ENCODE measurements at regions of chr4 and their contacts with region 1.

Region 1: GRCh38 chr4:118981839-118982381 is 93.3 kb downstream of the SYNPO2 start:
- H3K4me3 Mint-ChIP-seq: no peak overlapping the region
- H3K27ac Mint-ChIP-seq: no peak overlapping the region
- H3K4me1 Mint-ChIP-seq: peaks cover 19% of the 10 kb centered on the region
- H3K27me3 Mint-ChIP-seq: no peaks in the 10 kb centered on the region

Region 2: DNA sequence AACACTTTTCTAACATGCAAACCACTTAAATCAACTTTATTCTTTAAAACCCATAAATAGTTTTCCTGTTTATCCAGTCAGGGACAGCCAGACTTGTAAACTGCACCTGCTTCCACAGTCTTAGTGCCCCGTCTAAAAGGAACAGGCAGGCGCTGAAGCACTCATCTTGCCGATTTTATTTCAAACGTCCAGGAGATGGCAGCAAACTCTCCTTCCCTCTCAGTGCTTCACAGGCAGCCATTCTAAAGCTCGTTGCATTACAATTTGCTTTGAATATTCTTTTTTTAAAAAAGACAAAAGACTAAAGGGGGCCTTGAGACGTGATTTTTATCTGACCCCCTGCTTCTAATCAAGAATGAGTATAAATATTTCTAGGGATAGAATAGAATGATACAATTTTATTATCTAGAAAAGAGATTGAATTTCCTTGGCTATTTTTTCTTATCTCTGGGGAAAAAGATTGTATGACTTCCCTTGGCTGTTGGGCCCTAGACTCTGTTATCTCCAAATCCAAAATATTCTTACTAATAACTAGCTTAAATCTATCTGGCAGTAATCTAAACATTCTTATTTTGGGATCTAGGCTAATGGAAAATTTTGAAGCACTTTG is 60.1 kb after region 1 on chr4:
- intact Hi-C with region 1: loop called (anchors 2 kb)
- H3K4me3 Mint-ChIP-seq: no peak overlapping the region
- H3K27ac Mint-ChIP-seq: no peak overlapping the region
- H3K4me1 Mint-ChIP-seq: peaks cover 21% of the 10 kb centered on the region
- H3K27me3 Mint-ChIP-seq: no peaks in the 10 kb centered on the region

Region 3: DNA sequence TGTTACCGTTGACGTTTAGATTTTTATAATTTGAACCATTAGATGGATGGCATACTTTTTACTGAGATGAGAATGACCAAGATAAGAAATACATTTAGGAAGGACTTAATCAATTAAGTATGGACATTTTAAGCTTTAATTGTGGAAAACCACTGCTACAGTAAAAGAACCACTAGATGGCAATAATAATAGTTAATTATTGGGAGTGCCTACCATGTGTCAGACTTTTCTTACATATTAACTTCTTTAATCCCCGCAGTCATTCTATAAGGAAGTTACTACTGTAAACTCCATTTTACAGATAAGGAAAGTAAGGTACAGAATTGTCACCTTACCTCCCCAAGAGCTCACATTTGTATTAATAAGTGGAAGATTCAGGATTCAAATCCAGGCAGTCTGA is 105.2 kb after region 1 on chr4:
- intact Hi-C with region 1: no loop called
- H3K4me3 Mint-ChIP-seq: no peak overlapping the region
- H3K27ac Mint-ChIP-seq: no peak overlapping the region
- H3K4me1 Mint-ChIP-seq: no peaks in the 10 kb centered on the region
- H3K27me3 Mint-ChIP-seq: peaks cover 3% of the 10 kb centered on the region

Region 4: GRCh38 chr4:119286377-119287002 is 304.6 kb after region 1 on chr4:
- intact Hi-C with region 1: loop called (anchors 1 kb)
- H3K4me3 Mint-ChIP-seq: no peak overlapping the region
- H3K27ac Mint-ChIP-seq: no peak overlapping the region
- H3K4me1 Mint-ChIP-seq: peaks cover 6% of the 10 kb centered on the region
- H3K27me3 Mint-ChIP-seq: no peaks in the 10 kb centered on the region

Region 5: DNA sequence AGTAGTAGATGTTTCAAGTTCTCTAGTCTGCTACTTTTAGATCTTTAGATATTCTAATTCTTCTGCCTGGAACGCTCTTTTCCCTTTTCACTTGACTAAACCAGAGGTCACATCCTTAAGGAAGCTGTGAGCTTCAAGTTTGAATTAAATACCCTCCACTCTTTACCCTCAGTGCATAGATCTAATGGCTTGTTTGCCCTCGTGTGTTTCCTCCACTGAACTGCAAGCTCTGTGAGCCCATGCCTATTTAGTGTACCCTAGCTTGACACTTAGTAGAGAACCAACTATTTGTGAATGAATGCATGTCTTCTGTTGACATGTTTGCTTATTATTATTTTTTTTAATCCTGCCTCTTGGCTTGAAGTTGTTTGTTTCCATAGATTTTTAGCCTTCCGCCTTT is 508.4 kb after region 1 on chr4:
- intact Hi-C with region 1: loop called (anchors 10 kb)
- H3K4me3 Mint-ChIP-seq: no peak overlapping the region
- H3K27ac Mint-ChIP-seq: no peak overlapping the region
- H3K4me1 Mint-ChIP-seq: no peaks in the 10 kb centered on the region
- H3K27me3 Mint-ChIP-seq: no peaks in the 10 kb centered on the region

Region 6: DNA sequence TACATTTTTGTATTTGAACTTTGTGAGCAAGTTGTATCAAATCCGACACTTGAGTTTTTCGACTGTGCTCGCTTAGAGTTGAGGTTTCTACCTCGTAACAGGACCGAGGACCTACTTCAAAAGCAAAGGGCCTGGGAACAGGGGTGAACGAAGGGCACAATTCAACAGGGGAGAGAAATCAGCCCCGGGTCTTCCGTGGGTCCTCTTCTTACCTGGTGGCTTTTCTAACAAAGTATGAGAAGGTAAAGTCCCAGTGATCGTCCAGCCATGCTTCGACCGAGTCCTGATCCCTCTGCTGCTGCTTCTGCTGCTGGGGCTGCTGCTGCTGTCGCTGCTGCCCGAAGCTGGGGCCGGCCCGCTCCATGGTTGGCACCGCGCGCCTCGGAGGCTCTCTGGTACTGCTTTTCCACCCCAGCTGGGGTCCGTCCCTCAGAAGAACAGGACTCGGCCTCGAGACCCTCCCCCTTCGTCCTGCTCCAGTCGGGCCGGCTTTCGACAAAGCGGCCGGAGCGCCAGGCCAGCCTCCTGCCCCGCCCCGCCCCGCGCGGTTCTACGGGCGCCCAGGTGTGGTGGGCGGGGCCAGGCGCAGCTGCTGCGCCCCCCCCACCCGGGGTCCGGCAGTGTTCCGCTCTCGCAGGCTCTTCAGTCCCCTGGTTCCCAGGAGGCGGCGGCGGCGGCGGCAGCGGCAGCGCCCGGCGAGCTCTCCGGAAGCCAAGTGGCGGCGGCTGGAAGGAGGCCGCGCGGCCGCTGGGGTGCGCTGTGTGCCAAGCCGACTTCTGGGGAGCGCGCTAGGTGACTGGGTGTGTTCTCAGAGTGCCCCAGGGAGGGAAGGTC is 646.6 kb after region 1 on chr4 and contains the start of gene PDE5A:
- intact Hi-C with region 1: loop called (anchors 2 kb)
- H3K4me3 Mint-ChIP-seq: peak within 1 kb of the TSS; percentile 89
- H3K27ac Mint-ChIP-seq: no peak within 1 kb of the TSS
- H3K4me1 Mint-ChIP-seq: peaks cover 25% of the 10 kb centered on the region
- H3K27me3 Mint-ChIP-seq: peaks cover 61% of the 10 kb centered on the region

Region 7: GRCh38 chr4:120049732-120050494 is 1068.0 kb after region 1 on chr4:
- intact Hi-C with region 1: loop called (anchors 5 kb)
- H3K4me3 Mint-ChIP-seq: peak overlapping the region; percentile 51
- H3K27ac Mint-ChIP-seq: no peak overlapping the region
- H3K4me1 Mint-ChIP-seq: peaks cover 11% of the 10 kb centered on the region
- H3K27me3 Mint-ChIP-seq: no peaks in the 10 kb centered on the region

Measured in dendritic cell treated with granulocyte-macrophage colony-stimulating factor and Interleukin-4, amounts not matched to agents 40 ng/mL and 50 ng/mL, for 4 days (primary cell).